ENCODE measurements at regions of chr17 and their contacts with region 1.

Region 1: GRCh38 chr17:75428543-75429469 is 23.3 kb upstream of the GRB2 start:
- DNase-seq: no peak
- ATAC-seq: peak; percentile 46
- H3K4me3 ChIP-seq: no peak overlapping the region
- H3K4me1 ChIP-seq: peaks cover 3% of the 10 kb centered on the region
- CTCF ChIP-seq: no peak

Region 2: DNA sequence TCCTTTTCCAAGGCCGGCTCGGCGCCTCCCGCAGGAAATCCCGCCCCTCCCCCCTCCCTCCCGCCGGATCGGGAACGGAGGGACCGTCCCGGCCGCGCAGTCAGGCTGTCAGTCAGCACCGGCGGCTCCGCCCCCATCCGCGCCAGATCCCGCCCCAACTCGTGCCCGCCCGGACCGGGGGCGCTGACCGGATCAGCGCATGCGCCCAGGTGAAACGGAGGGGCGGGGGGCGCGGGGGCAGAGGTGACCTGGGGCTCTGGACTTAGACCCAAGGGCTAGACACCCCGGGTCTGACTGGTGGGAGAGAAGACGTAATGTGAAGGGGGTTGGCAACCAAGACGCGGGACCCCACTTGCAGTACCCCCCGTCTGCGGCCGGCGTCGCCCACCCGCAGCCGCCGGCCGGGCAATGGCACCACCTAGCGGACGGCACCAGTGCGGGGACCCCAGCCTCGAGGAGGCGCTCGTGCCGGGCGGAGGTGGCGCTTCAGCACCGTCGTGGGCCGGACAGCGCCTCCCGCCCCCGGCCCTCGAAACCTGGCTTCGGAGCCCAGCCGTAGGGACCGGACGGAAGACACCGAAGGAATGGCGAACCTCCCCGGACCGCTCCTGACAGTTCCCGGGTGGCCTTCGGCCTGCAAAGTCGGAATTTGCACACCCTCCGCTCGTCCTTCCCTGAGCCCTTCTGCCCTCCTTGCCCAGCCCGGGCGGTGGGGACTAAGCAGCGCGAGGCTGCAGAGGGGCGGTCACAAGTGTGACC is 86.9 kb after region 1 on chr17 and contains the start of gene CASKIN2:
- intact Hi-C with region 1: loop called (anchors 2 to 10 kb)
- DNase-seq: peak; percentile 95 to 98 (median 97)
- ATAC-seq: peak; percentile 84
- H3K4me3 ChIP-seq: peak within 1 kb of the TSS; percentile 94
- H3K4me1 ChIP-seq: peaks cover 30% of the 10 kb centered on the region
- CTCF ChIP-seq: peak; percentile 92
- total RNA-seq, gene CASKIN2: 27.8 to 44.5 (median 33.8) TPM

Measured in mucosa of descending colon (tissue), 3 donors.